MCF 10A (cell line): ENCODE measurements at regions of chr1 and their contacts with region 1.

Region 1: GRCh38 chr1:11550664-11551283 is 71.8 kb downstream of the DISP3 start:
- DNase-seq: peak; percentile 91
- H3K4me3 Mint-ChIP-seq: no peak overlapping the region
- H3K27ac Mint-ChIP-seq: no peak overlapping the region
- H3K4me1 Mint-ChIP-seq: no peaks in the 10 kb centered on the region
- H3K27me3 Mint-ChIP-seq: peaks cover 75% of the 10 kb centered on the region
- CTCF ChIP-seq: no peak

Region 2: DNA sequence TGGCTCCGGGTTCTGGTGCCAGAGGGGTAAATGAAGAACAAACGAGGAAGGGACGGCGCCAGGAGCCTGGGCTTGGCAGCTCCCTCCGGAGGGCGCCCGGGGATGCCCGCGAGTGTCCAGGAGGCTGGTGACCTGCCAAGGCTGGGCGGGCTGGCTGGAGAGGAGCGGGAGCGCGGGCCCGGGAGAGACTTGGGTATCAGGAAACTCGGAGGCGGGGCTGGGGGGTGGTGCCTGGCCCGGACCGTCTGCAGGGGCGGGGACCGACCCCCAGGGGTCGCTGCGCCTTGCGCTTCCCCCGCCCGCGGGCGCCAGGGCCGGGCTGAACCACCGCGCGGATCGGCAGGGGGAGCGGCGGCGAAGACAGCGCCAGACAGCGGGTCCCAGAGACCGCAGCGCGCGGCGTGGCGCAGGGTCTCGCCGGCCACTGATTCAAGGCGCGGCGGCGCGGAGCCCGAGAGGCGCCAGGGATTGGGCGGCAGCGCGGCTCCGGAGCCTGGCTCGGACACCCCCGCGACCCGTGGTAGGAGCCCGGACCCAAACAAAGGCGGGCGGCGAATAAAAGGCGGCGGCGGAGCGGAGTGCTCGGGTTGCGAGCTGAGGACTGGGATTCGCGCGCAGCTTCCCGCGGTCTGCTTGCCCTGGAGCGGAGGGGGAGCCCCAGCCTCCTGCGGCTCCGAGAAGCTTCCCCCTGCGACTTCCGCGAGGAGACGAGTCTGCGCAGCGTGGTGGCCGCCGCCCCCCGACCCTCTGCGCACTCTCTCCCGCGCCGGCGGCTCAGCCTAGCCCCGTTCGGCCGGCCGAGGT is 72.0 kb before region 1 on chr1 and contains the start of gene DISP3:
- CTCF ChIA-PET with region 1: interaction called, 3 read pairs
- POLR2A ChIA-PET with region 1: no interaction called
- intact Hi-C with region 1: loop called (anchors 10 kb)
- DNase-seq: peak; percentile 50
- H3K4me3 Mint-ChIP-seq: peak within 1 kb of the TSS; percentile 64
- H3K27ac Mint-ChIP-seq: no peak within 1 kb of the TSS
- H3K4me1 Mint-ChIP-seq: no peaks in the 10 kb centered on the region
- H3K27me3 Mint-ChIP-seq: peaks cover 45% of the 10 kb centered on the region
- CTCF ChIP-seq: peak; percentile 70
- total RNA-seq, gene DISP3: 0.09 and 0.17 TPM in 2 replicates